ENCODE measurements at regions of chr12 and their contacts with region 1.

Region 1: GRCh38 chr12:110613771-110614684 is at the start of gene TCTN1:
- DNase-seq: peak; percentile 70
- ATAC-seq: peak; percentile 99
- H3K4me3 ChIP-seq: peak within 1 kb of the TSS; percentile 58
- H3K27ac ChIP-seq: peak within 1 kb of the TSS; percentile 64
- H3K4me1 ChIP-seq: peaks cover 17% of the 10 kb centered on the region
- H3K27me3 ChIP-seq: no peaks in the 10 kb centered on the region
- CTCF ChIP-seq: no peak
- EP300 ChIP-seq: no peak
- POLR2A ChIP-seq: peak; percentile 95
- RAD21 ChIP-seq: no peak
- polyA plus RNA-seq, gene TCTN1: 8.8 to 10.2 TPM

Region 2: GRCh38 chr12:110109037-110109836 is 504.8 kb before region 1 on chr12:
- CTCF ChIA-PET with region 1: no interaction called
- POLR2A ChIA-PET with region 1: interaction called, 5 read pairs
- RAD21 ChIA-PET with region 1: no interaction called
- SMC1A ChIA-PET with region 1: no interaction called
- in situ Hi-C with region 1: loop called (anchors 5 kb)
- intact Hi-C with region 1: no loop called
- DNase-seq: no peak
- ATAC-seq: no peak
- H3K4me3 ChIP-seq: no peak overlapping the region
- H3K27ac ChIP-seq: no peak overlapping the region
- H3K4me1 ChIP-seq: peaks cover 4% of the 10 kb centered on the region; the same call in 1 of the 2 replicates
- H3K27me3 ChIP-seq: no peaks in the 10 kb centered on the region
- CTCF ChIP-seq: no peak
- EP300 ChIP-seq: no peak
- POLR2A ChIP-seq: no peak
- RAD21 ChIP-seq: no peak

Region 3: DNA sequence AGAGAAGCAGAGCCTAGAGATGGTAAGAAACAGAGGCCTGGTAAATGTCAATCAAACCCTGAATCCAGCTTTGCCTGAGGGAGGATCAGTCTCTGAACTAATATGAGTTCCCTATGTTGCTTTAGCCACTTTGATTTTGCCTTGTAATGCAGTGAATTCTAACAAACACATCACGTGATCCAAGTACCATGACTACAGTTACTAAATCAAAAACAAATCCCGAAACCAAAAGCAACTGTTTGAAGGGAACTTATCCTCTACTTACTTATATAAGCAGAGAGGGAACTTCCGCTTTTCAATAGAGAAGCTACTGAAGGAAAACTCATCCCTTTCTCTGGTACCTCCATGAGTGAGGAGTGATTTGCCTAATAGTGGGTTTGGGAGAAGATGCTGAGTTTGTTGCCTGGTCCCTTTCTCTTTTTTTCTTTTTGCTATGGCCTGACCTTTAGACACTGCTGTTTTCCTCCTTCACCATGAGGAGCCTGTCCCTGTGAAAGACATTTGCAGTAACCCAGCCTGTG is 23.2 kb before region 1 on chr12:
- CTCF ChIA-PET with region 1: no interaction called
- POLR2A ChIA-PET with region 1: no interaction called
- RAD21 ChIA-PET with region 1: no interaction called
- SMC1A ChIA-PET with region 1: no interaction called
- in situ Hi-C with region 1: no loop called
- intact Hi-C with region 1: no loop called
- DNase-seq: peak; percentile 79
- ATAC-seq: peak; percentile 93
- H3K4me3 ChIP-seq: peak overlapping the region; percentile 42; the same call in 1 of the 2 replicates
- H3K27ac ChIP-seq: peak overlapping the region; percentile 85
- H3K4me1 ChIP-seq: peaks cover 15% of the 10 kb centered on the region
- H3K27me3 ChIP-seq: no peaks in the 10 kb centered on the region
- CTCF ChIP-seq: no peak
- EP300 ChIP-seq: peak in 1 of 2 experiments; percentile 81; a peak in 2 of 4 replicates
- POLR2A ChIP-seq: no peak
- RAD21 ChIP-seq: no peak

Region 4: GRCh38 chr12:110639336-110640141 is 25.5 kb after region 1 on chr12:
- CTCF ChIA-PET with region 1: interaction called, 46 read pairs
- POLR2A ChIA-PET with region 1: interaction called, 46 read pairs
- RAD21 ChIA-PET with region 1: interaction called, 23 read pairs
- SMC1A ChIA-PET with region 1: interaction called, 103 read pairs
- in situ Hi-C with region 1: no loop called
- intact Hi-C with region 1: no loop called
- DNase-seq: no peak
- ATAC-seq: peak; percentile 67
- H3K4me3 ChIP-seq: no peak overlapping the region
- H3K27ac ChIP-seq: no peak overlapping the region
- H3K4me1 ChIP-seq: peaks cover 61% of the 10 kb centered on the region
- H3K27me3 ChIP-seq: no peaks in the 10 kb centered on the region
- CTCF ChIP-seq: no peak
- EP300 ChIP-seq: no peak
- POLR2A ChIP-seq: no peak
- RAD21 ChIP-seq: no peak

Region 5: DNA sequence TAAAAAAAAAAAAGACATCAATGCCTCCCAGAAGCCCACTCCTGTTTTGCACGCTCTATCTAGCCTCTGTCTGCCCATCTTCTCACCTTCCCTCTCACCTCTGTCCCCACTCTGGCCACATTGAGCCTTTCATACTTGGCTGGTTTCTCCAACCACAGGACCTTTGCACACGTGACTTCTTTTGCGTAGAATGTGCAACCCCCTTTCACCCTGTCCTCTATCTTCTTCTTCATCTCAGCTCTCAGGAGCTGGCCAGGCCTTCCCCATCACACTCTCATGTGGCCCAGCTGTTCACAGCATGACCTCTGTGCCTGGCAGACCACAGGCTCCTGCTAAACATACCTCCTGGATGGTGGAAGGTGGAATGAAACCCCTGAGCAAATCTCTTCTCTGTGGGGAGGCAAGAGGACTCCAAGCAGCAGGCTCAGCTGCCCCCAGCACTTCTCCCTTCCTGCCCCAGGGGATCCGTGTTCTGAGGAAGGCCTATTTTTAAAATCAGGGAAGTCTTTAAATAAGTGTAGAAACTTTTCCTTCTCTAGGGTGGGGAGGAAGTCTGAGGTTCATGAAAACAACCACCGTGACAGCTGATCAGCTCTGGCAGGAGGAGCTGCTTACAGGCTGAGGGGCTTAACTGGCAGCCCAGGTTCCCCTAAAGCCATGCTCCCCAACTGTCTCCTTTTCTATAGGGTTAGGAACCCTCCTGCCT is 63.3 kb after region 1 on chr12:
- CTCF ChIA-PET with region 1: interaction called, 3 read pairs
- POLR2A ChIA-PET with region 1: interaction called, 22 read pairs
- RAD21 ChIA-PET with region 1: interaction called, 28 read pairs
- SMC1A ChIA-PET with region 1: interaction called, 14 read pairs
- in situ Hi-C with region 1: no loop called
- intact Hi-C with region 1: no loop called
- DNase-seq: peak; percentile 97
- ATAC-seq: peak; percentile 89
- H3K4me3 ChIP-seq: peak overlapping the region; percentile 42
- H3K27ac ChIP-seq: peak overlapping the region; percentile 87
- H3K4me1 ChIP-seq: peaks cover 72% of the 10 kb centered on the region
- H3K27me3 ChIP-seq: no peaks in the 10 kb centered on the region
- CTCF ChIP-seq: no peak
- EP300 ChIP-seq: peak; percentile 50 to 81; a peak in 3 of 4 replicates
- POLR2A ChIP-seq: 0 out of 2 replicates have a peak, but pooled peaks have one; percentile 38
- RAD21 ChIP-seq: no peak

Region 6: GRCh38 chr12:110698171-110698902 is 84.3 kb after region 1 on chr12:
- CTCF ChIA-PET with region 1: interaction called, 43 read pairs
- POLR2A ChIA-PET with region 1: interaction called, 12 read pairs
- RAD21 ChIA-PET with region 1: interaction called, 22 read pairs
- SMC1A ChIA-PET with region 1: interaction called, 55 read pairs
- in situ Hi-C with region 1: loop called (anchors 5 kb)
- intact Hi-C with region 1: loop called (anchors 1 kb)
- DNase-seq: peak; percentile 90
- ATAC-seq: peak; percentile 99
- H3K4me3 ChIP-seq: no peak overlapping the region
- H3K27ac ChIP-seq: peak overlapping the region; percentile 64
- H3K4me1 ChIP-seq: peaks cover 29% of the 10 kb centered on the region
- H3K27me3 ChIP-seq: no peaks in the 10 kb centered on the region
- CTCF ChIP-seq: peak; percentile 88 to 90 (median 89)
- EP300 ChIP-seq: no peak
- POLR2A ChIP-seq: no peak
- RAD21 ChIP-seq: peak; percentile 92